ENCODE measurements at regions of chr2 and their contacts with region 1.

Region 1: GRCh38 chr2:70789304-70790135 is 923 bp downstream of the FIGLA start:
- DNase-seq: peak; percentile 89

Region 2: GRCh38 chr2:70596739-70597138 is 192.8 kb before region 1 on chr2:
- in situ Hi-C with region 1: no loop called
- DNase-seq: peak; percentile 91

Region 3: GRCh38 chr2:70964596-70965386 is 175.3 kb after region 1 on chr2:
- in situ Hi-C with region 1: loop called (anchors 25 kb)
- DNase-seq: peak; percentile 73

Measured in KBM-7 (cell line).